WTC11 (cell line): ENCODE measurements at regions of chr6 and their contacts with region 1.

Region 1: DNA sequence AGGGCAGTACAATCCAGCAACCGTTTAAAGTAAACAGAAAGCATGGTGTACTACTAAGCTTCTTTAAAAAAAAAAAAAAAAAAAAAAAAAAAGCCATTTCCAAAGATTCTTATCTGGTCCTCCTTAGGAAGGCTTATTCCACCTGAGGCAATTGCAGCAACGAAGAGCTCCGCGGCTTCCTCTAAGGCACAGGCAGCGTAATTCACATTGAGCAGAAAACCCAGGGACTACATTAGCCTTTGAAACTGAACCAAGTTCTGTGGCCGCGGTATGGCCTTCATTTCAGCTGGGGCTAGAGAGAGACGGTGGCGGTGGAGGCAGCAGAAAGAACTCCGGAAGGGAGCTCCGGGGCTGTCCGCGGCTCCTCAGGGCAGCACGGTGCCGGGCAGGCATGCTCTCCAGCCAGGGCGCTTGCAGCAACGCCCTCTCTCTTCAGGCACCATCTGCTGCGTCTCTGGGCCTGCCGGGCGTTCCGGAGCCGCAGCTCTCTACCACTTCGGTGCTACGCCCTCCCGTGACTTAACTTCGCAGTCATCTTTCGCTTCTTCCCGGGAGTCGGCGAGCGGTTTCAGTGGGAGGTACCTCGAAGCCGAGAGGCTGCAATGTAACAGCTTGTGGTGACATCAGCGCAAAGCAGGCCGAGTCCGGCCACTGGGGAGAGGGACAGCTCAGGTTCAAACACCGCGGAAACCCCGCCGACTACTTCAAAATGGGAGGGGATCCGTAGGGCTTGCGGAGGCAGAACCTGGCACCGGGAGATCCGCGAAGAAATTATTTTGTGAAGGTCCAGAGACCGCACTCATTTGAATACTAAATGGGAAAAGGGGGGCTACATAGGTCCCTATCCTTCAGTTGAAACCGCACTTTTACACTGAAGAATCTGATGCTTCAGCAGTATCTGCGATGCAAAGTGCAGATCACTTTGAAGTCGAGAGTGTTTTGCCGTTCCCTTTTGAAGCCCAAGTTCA is 100.0 kb downstream of the DST start:
- DNase-seq: peak; percentile 92
- ATAC-seq: peak; percentile 93
- H3K4me3 Mint-ChIP-seq: no peak overlapping the region
- H3K27ac Mint-ChIP-seq: no peak overlapping the region
- H3K4me1 Mint-ChIP-seq: peaks cover 8% of the 10 kb centered on the region
- H3K27me3 Mint-ChIP-seq: no peaks in the 10 kb centered on the region; the same call in 1 of the 2 replicates
- CTCF ChIP-seq: no peak

Region 2: DNA sequence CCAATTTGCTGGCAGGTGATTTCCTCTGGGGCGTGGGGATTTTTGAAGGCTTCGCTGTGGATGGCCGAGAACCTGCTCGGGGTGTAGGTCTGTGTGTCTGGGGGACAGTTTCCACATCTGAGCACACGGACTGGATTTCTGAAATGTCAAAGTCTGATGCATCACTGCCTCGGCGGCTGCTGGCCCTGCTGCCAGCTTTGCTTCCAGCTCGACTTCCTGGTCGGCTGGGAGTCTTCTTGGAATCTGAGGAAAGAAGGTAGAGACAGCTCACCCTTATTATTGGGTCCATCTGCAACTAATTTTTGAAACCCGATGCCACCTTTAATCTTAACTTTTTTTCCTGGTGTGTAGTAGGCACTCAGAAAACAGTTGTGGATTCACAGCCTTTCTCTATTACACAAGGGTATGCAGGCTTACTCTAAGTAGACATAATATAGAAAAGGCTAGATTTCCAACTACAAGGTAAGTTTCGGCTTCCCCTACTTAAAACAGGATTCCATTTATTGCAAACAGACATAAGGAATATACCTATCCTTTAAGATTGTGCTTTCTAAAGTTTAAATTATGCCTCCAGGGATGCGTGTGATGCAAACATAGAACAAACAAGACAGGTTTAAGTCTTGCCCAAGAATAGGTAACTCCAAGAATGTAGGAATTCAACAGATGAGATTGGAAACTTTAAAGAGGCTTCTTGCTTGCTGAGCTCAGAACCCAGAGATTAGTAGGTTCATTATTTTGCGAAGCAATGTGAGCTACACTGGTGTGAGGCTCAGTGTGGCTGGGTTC is 83.4 kb before region 1 on chr6:
- CTCF ChIA-PET with region 1: no interaction called
- POLR2A ChIA-PET with region 1: no interaction called
- DNase-seq: no peak
- ATAC-seq: no peak
- H3K4me3 Mint-ChIP-seq: no peak overlapping the region
- H3K27ac Mint-ChIP-seq: no peak overlapping the region
- H3K4me1 Mint-ChIP-seq: no peaks in the 10 kb centered on the region
- H3K27me3 Mint-ChIP-seq: no peaks in the 10 kb centered on the region
- CTCF ChIP-seq: no peak

Region 3: DNA sequence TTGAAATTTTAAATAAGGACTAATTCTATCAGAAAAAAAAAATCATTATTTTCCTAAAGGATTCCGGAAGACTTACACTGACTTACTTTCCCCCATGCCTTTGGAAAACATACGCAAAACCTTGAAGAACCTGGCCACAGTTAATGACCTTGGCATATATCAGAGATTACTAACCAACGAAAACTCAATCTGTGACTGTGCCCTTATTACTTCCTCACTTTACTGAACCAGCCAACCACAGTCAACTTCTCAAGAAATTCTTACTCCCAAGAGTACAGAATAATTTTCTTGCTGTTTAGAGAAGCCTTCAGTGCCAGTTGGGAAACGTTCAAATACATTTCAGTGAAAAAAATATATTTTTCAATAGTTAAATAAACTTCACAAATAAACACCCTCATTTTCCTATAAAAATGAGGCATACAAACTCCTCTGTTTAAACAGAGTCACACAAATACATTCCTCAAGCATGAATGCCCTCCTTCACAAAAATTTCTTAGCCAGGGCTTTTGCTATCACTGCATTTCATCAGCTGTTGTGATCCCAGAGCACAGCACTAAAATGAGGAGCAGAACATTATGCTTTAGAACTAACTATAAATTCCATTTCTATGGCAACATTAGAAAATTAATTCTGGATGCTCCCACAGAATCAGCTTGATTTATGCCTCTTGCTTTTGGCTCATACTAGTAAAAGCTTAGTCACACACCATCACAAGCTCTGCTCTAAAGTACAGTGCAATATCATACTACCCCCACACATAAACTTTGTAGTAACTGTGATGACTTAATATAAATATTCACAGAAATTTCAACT is 17.6 kb before region 1 on chr6:
- CTCF ChIA-PET with region 1: interaction called, 10 read pairs
- POLR2A ChIA-PET with region 1: interaction called, 3 read pairs
- DNase-seq: no peak
- ATAC-seq: no peak
- H3K4me3 Mint-ChIP-seq: no peak overlapping the region
- H3K27ac Mint-ChIP-seq: no peak overlapping the region; the same call in none of the 2 replicates
- H3K4me1 Mint-ChIP-seq: peaks cover 64% of the 10 kb centered on the region
- H3K27me3 Mint-ChIP-seq: no peaks in the 10 kb centered on the region
- CTCF ChIP-seq: no peak

Region 4: DNA sequence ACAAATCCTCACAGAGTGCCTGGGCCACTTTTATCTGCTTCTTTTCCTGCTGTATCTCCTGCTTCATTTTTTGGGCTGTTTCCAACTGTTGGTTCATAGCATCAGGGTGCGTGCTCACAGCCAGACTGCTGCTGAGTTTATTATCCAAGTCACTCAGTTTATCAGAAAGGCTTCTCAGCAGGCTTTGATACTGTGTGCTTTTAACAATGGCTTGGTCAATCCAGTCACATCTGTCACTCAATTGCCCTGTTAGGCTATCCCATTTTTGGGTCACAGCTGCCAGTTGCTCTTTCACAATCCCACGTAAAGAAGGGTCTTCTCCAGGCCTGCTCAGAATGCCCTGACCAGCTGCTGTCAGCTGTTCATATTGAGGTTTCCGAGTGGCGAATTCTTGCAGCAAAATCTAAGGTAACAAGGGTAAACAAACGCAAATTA is 12.8 kb after region 1 on chr6:
- CTCF ChIA-PET with region 1: no interaction called
- POLR2A ChIA-PET with region 1: no interaction called
- DNase-seq: no peak
- ATAC-seq: no peak
- H3K4me3 Mint-ChIP-seq: no peak overlapping the region
- H3K27ac Mint-ChIP-seq: no peak overlapping the region
- H3K4me1 Mint-ChIP-seq: no peaks in the 10 kb centered on the region
- H3K27me3 Mint-ChIP-seq: no peaks in the 10 kb centered on the region
- CTCF ChIP-seq: no peak

Region 5: GRCh38 chr6:56595490-56596122 is 53.0 kb after region 1 on chr6:
- CTCF ChIA-PET with region 1: interaction called, 15 read pairs
- POLR2A ChIA-PET with region 1: no interaction called
- DNase-seq: peak; percentile 24
- ATAC-seq: peak; percentile 83; the same call in 1 of the 2 replicates
- H3K4me3 Mint-ChIP-seq: no peak overlapping the region
- H3K27ac Mint-ChIP-seq: peak overlapping the region; percentile 24
- H3K4me1 Mint-ChIP-seq: no peaks in the 10 kb centered on the region
- H3K27me3 Mint-ChIP-seq: no peaks in the 10 kb centered on the region
- CTCF ChIP-seq: peak; percentile 47

Region 6: DNA sequence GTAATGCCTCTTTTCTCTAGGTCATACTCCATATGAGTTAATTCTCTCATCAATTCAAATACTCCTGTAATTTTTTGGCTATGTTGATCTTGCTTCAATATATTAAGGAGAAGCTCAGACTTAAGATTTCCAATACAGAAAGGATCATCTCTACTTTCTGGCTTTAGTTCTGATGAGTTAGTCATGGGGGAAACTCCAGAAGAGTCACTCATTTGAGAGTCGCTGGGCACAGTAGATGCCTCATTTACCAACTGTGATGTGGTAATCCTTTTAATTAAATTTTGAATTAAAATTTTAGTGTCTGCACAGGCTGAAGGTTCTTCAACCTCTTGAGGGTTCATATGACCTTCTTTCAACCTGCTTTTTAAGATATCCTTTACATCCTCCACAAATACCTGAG is 61.5 kb after region 1 on chr6:
- CTCF ChIA-PET with region 1: interaction called, 10 read pairs
- POLR2A ChIA-PET with region 1: no interaction called
- DNase-seq: no peak
- ATAC-seq: no peak
- H3K4me3 Mint-ChIP-seq: no peak overlapping the region
- H3K27ac Mint-ChIP-seq: no peak overlapping the region
- H3K4me1 Mint-ChIP-seq: no peaks in the 10 kb centered on the region
- H3K27me3 Mint-ChIP-seq: no peaks in the 10 kb centered on the region
- CTCF ChIP-seq: no peak